CD8-positive, alpha-beta T cell (primary cell): ENCODE measurements at regions of chr11 and their contacts with region 1.

Region 1: GRCh38 chr11:33808228-33808828 is 34.0 kb upstream of the FBXO3 start:
- DNase-seq: peak; percentile 69 to 93 (median 83)
- ATAC-seq: peak; percentile 97
- H3K4me3 ChIP-seq: no peak overlapping the region
- H3K4me3 Mint-ChIP-seq: no peak overlapping the region
- H3K27ac ChIP-seq: no peak overlapping the region
- H3K27ac Mint-ChIP-seq: no peak overlapping the region
- H3K4me1 ChIP-seq: no peaks in the 10 kb centered on the region
- H3K4me1 Mint-ChIP-seq: peaks cover 2% of the 10 kb centered on the region
- H3K27me3 ChIP-seq: no peaks in the 10 kb centered on the region
- H3K27me3 Mint-ChIP-seq: peaks cover 9% of the 10 kb centered on the region
- CTCF ChIP-seq: peak; percentile 90

Region 2: GRCh38 chr11:33829433-33830141 is 21.3 kb after region 1 on chr11:
- CTCF ChIA-PET with region 1: interaction called, 74 read pairs
- POLR2A ChIA-PET with region 1: interaction called, 5 read pairs
- intact Hi-C with region 1: loop called (anchors 1 kb)
- DNase-seq: peak; percentile 18 to 75 (median 49)
- ATAC-seq: peak; percentile 88
- H3K4me3 ChIP-seq: peak overlapping the region; percentile 2 to 19
- H3K4me3 Mint-ChIP-seq: peak overlapping the region; percentile 83
- H3K27ac ChIP-seq: no peak overlapping the region
- H3K27ac Mint-ChIP-seq: no peak overlapping the region
- H3K4me1 ChIP-seq: peaks cover 7% of the 10 kb centered on the region
- H3K4me1 Mint-ChIP-seq: peaks cover 6% of the 10 kb centered on the region
- H3K27me3 ChIP-seq: peaks cover 10% of the 10 kb centered on the region in 2 experiments
- H3K27me3 Mint-ChIP-seq: peaks cover 57% of the 10 kb centered on the region
- CTCF ChIP-seq: peak; percentile 51

Region 3: DNA sequence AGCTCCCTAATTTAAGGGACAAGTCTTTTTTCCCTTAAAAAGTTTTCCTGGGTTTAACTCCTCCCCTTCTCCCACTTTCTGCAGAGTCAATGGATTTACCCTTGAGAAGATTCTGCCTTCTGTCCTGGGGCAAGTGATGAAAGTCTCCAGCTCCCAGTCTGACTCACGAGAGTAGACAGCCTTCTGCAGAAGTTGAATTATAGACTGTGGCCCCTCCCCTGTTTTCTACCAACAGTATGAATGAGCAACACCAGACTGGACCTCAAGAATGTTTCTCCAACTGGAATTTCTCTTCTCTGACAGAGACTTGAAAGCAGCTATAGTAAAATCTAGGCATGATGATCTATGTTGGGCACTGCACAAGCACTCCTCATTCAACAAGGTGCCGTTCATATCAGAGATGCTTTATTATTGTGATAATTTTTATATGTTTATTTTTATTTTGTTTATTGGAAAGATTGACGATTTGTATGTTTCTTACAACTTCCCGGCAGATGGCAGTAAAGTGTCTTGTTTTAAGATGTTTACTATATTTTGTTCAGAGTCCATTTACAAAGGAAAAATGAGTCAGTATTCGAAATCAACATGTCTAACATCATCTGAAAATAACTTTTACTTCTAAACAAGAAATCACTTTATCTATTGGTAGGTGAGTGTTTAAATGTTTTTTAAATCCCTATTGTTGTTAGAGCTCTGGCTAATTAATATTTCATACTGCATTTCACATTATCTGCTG is 27.0 kb after region 1 on chr11:
- CTCF ChIA-PET with region 1: interaction called, 74 read pairs
- POLR2A ChIA-PET with region 1: interaction called, 5 read pairs
- intact Hi-C with region 1: no loop called
- DNase-seq: peak in 2 of 9 experiments; percentile 10 to 22
- ATAC-seq: no peak
- H3K4me3 ChIP-seq: no peak overlapping the region
- H3K4me3 Mint-ChIP-seq: no peak overlapping the region
- H3K27ac ChIP-seq: no peak overlapping the region
- H3K27ac Mint-ChIP-seq: no peak overlapping the region
- H3K4me1 ChIP-seq: no peaks in the 10 kb centered on the region
- H3K4me1 Mint-ChIP-seq: no peaks in the 10 kb centered on the region
- H3K27me3 ChIP-seq: no peaks in the 10 kb centered on the region
- H3K27me3 Mint-ChIP-seq: peaks cover 33% of the 10 kb centered on the region
- CTCF ChIP-seq: peak; percentile 21

Region 4: GRCh38 chr11:33893711-33894397 is 85.5 kb after region 1 on chr11:
- CTCF ChIA-PET with region 1: no interaction called
- POLR2A ChIA-PET with region 1: no interaction called
- intact Hi-C with region 1: no loop called
- DNase-seq: peak; percentile 25 to 85 (median 63)
- ATAC-seq: peak; percentile 89
- H3K4me3 ChIP-seq: peak overlapping the region; percentile 40
- H3K4me3 Mint-ChIP-seq: peak overlapping the region; percentile 73
- H3K27ac ChIP-seq: peak overlapping the region; percentile 0 to 31
- H3K27ac Mint-ChIP-seq: peak overlapping the region; percentile 66
- H3K4me1 ChIP-seq: peaks cover 39% of the 10 kb centered on the region
- H3K4me1 Mint-ChIP-seq: peaks cover 45% of the 10 kb centered on the region
- H3K27me3 ChIP-seq: peaks cover 6 to 10% of the 10 kb centered on the region in 2 experiments
- H3K27me3 Mint-ChIP-seq: peaks cover 46% of the 10 kb centered on the region
- CTCF ChIP-seq: no peak

Region 5: GRCh38 chr11:33970984-33971466 is 162.7 kb after region 1 on chr11:
- CTCF ChIA-PET with region 1: no interaction called
- POLR2A ChIA-PET with region 1: no interaction called
- intact Hi-C with region 1: loop called in 1 of 2 experiments (anchors 5 kb)
- DNase-seq: peak in 3 of 9 experiments; percentile 17 to 51 (median 23)
- ATAC-seq: no peak
- H3K4me3 ChIP-seq: no peak overlapping the region
- H3K4me3 Mint-ChIP-seq: no peak overlapping the region
- H3K27ac ChIP-seq: no peak overlapping the region
- H3K27ac Mint-ChIP-seq: no peak overlapping the region
- H3K4me1 ChIP-seq: no peaks in the 10 kb centered on the region
- H3K4me1 Mint-ChIP-seq: no peaks in the 10 kb centered on the region
- H3K27me3 ChIP-seq: peaks cover 0 to 2% of the 10 kb centered on the region in 2 experiments
- H3K27me3 Mint-ChIP-seq: peaks cover 9% of the 10 kb centered on the region
- CTCF ChIP-seq: peak; percentile 31

Region 6: GRCh38 chr11:33987975-33988580 is 179.8 kb after region 1 on chr11:
- CTCF ChIA-PET with region 1: interaction called, 6 read pairs
- POLR2A ChIA-PET with region 1: no interaction called
- intact Hi-C with region 1: loop called (anchors 1 to 2 kb)
- DNase-seq: peak; percentile 25 to 86 (median 77)
- ATAC-seq: peak; percentile 83
- H3K4me3 ChIP-seq: no peak overlapping the region
- H3K4me3 Mint-ChIP-seq: no peak overlapping the region
- H3K27ac ChIP-seq: no peak overlapping the region
- H3K27ac Mint-ChIP-seq: no peak overlapping the region
- H3K4me1 ChIP-seq: no peaks in the 10 kb centered on the region
- H3K4me1 Mint-ChIP-seq: peaks cover 18% of the 10 kb centered on the region
- H3K27me3 ChIP-seq: peaks cover 0 to 3% of the 10 kb centered on the region in 2 experiments
- H3K27me3 Mint-ChIP-seq: peaks cover 3% of the 10 kb centered on the region
- CTCF ChIP-seq: peak; percentile 76

Region 7: GRCh38 chr11:34468209-34468841 is 660.0 kb after region 1 on chr11:
- CTCF ChIA-PET with region 1: interaction called, 8 read pairs
- POLR2A ChIA-PET with region 1: no interaction called
- intact Hi-C with region 1: loop called in 1 of 2 experiments (anchors 2 kb)
- DNase-seq: peak in 6 of 9 experiments; percentile 5 to 55 (median 32)
- ATAC-seq: peak; percentile 76
- H3K4me3 ChIP-seq: no peak overlapping the region
- H3K4me3 Mint-ChIP-seq: no peak overlapping the region
- H3K27ac ChIP-seq: no peak overlapping the region
- H3K27ac Mint-ChIP-seq: no peak overlapping the region
- H3K4me1 ChIP-seq: no peaks in the 10 kb centered on the region
- H3K4me1 Mint-ChIP-seq: peaks cover 2% of the 10 kb centered on the region
- H3K27me3 ChIP-seq: no peaks in the 10 kb centered on the region
- H3K27me3 Mint-ChIP-seq: no peaks in the 10 kb centered on the region
- CTCF ChIP-seq: peak; percentile 65

Region 8: GRCh38 chr11:34492806-34493414 is 684.6 kb after region 1 on chr11:
- CTCF ChIA-PET with region 1: interaction called, 17 read pairs
- POLR2A ChIA-PET with region 1: no interaction called
- intact Hi-C with region 1: loop called (anchors 1 kb)
- DNase-seq: peak in 5 of 9 experiments; percentile 26 to 55 (median 42)
- ATAC-seq: no peak
- H3K4me3 ChIP-seq: no peak overlapping the region
- H3K4me3 Mint-ChIP-seq: no peak overlapping the region
- H3K27ac ChIP-seq: no peak overlapping the region
- H3K27ac Mint-ChIP-seq: no peak overlapping the region
- H3K4me1 ChIP-seq: no peaks in the 10 kb centered on the region
- H3K4me1 Mint-ChIP-seq: no peaks in the 10 kb centered on the region
- H3K27me3 ChIP-seq: no peaks in the 10 kb centered on the region
- H3K27me3 Mint-ChIP-seq: peaks cover 2% of the 10 kb centered on the region
- CTCF ChIP-seq: peak; percentile 42